Common myeloid progenitor, CD34-positive (primary cell): ENCODE measurements at regions of chr19 and their contacts with region 1.

Region 1: GRCh38 chr19:54137086-54137921 is at the start of gene CNOT3:
- DNase-seq: peak; percentile 100
- H3K4me3 ChIP-seq: peak within 1 kb of the TSS; percentile 64 to 84 (median 78)
- H3K27ac ChIP-seq: peak within 1 kb of the TSS; percentile 92 to 97
- H3K4me1 ChIP-seq: peaks cover 6 to 40% (median 26%) of the 10 kb centered on the region in 4 experiments
- H3K27me3 ChIP-seq: no peaks in the 10 kb centered on the region

Region 2: GRCh38 chr19:53867225-53868090 is 269.8 kb before region 1 on chr19 and contains the start of gene MYADM:
- CTCF ChIA-PET with region 1: no interaction called
- POLR2A ChIA-PET with region 1: no interaction called
- DNase-seq: peak; percentile 100
- H3K4me3 ChIP-seq: peak within 1 kb of the TSS; percentile 75 to 100 (median 96)
- H3K27ac ChIP-seq: peak within 1 kb of the TSS; percentile 96 to 99
- H3K4me1 ChIP-seq: peaks cover 5 to 52% (median 41%) of the 10 kb centered on the region in 4 experiments
- H3K27me3 ChIP-seq: no peaks in the 10 kb centered on the region

Region 3: DNA sequence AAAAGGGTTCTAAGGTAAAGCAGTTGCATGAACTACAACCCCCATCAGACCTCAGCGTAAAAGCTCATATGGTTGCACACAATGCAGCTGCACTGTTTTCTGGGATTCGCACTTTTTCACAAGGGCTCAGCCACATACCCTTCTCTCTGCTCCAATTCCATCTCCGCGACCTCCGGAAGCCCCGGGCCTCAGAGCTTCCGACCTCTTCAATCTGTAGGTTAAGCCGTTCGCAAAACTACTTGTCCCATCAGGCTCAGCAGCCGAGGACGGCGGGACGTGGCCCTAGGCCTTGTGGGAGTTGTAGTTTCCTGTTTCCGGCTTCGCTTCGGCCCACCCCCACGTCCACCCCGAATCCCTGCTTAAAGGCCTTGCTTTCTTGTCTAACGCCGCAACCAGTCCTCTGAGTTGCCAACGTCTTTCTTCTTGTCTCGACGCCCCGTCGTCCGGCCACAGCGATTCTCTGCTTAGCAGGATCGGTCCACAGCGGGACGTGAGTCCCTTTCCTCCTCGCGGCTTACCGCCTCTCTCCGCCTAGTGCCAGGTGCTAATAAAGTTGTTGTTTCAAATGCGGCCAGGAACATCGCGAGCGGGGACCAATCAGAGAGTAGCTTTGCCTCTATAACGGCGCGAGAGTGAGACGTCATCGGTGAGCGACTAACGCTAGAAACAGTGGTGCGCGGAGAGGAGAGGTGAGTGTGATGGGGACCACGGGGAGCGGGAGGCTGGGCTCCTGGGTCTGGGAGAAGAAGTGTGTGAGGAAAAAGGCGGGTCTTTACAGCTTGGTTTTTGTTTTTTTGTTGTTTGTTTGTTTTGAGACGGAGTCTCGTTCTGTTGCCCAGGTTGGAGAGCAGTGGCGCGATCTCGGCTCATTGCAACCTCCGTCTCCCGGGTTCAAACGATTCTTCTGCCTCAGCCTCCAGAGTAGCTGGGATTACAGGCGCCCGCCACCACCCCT is 21.9 kb before region 1 on chr19 and contains the starts of genes PRPF31 and TFPT:
- CTCF ChIA-PET with region 1: interaction called, 4 read pairs
- POLR2A ChIA-PET with region 1: interaction called, 11 read pairs
- DNase-seq: peak; percentile 99
- H3K4me3 ChIP-seq: peak within 1 kb of the TSS; percentile 85 to 99 (median 94)
- H3K27ac ChIP-seq: peak within 1 kb of the TSS; percentile 78 to 89
- H3K4me1 ChIP-seq: peaks cover 0 to 23% (median 20%) of the 10 kb centered on the region in 4 experiments
- H3K27me3 ChIP-seq: no peaks in the 10 kb centered on the region